ENCODE measurements at regions of chr13 and their contacts with region 1.

Region 1: DNA sequence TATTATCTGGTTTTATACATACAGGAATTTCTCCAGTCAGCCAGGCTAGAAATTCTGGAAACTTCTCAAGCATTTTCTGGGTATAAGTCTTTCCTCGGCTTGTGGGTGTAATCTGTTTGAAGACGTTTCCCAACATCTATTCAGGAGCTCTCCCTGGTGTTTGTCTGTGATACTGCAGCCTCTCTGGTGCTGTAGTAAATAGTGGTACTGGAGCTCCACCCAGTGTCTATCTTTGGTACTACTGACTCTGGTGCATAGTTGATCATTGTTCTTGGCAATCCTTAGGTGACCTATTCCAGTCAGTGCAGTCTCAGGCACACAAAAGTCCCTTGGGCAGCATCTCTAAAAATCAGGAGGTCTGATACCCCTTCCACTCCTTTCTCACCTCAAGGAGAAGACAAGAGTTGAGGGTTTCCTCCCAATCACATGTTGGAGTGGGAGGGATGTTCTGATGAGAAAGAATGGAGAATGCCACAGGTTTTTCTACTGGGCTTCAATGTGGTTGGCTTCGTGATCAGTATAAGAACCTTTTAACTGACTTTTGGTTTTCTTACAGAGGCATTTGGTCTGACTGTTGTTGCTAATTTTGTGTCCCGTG is 115.5 kb downstream of the CYSLTR2 start:
- DNase-seq: peak; percentile 68
- ATAC-seq: peak; percentile 98
- H3K4me3 ChIP-seq: no peak overlapping the region
- H3K27ac ChIP-seq: no peak overlapping the region
- H3K4me1 ChIP-seq: no peaks in the 10 kb centered on the region
- H3K27me3 ChIP-seq: no peaks in the 10 kb centered on the region; a peak in 1 of 4 replicates
- CTCF ChIP-seq: peak; percentile 97 to 100 (median 99); a peak in 5 of 6 replicates
- EP300 ChIP-seq: no peak
- POLR2A ChIP-seq: no peak
- RAD21 ChIP-seq: peak; percentile 100

Region 2: DNA sequence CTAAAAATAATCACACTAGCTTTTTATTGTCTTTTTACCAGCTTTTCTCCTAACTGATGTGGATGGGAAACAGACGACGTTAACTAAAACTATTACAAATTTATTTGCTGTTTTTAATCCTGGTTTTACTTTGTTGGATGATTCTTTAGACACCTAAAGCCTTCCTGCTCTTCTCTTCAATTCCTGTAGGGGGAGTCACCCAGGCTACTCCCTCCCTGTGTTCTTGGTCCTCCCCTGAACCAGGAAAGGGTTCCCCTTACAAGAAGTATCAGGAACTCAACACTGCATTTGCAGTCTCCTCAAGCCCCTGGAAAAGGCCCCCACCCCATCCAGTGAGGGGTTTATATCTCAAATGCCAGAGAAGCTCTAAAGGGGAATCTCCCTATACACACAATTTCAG is 974.2 kb before region 1 on chr13:
- CTCF ChIA-PET with region 1: no interaction called
- POLR2A ChIA-PET with region 1: no interaction called
- RAD21 ChIA-PET with region 1: interaction called, 3 read pairs
- SMC1A ChIA-PET with region 1: no interaction called
- in situ Hi-C with region 1: no loop called
- intact Hi-C with region 1: loop called (anchors 10 kb)
- DNase-seq: no peak
- ATAC-seq: peak; percentile 52
- H3K4me3 ChIP-seq: no peak overlapping the region
- H3K27ac ChIP-seq: no peak overlapping the region
- H3K4me1 ChIP-seq: no peaks in the 10 kb centered on the region
- H3K27me3 ChIP-seq: no peaks in the 10 kb centered on the region
- CTCF ChIP-seq: peak; percentile 20 to 55 (median 52); a peak in 4 of 6 replicates
- EP300 ChIP-seq: no peak
- POLR2A ChIP-seq: no peak
- RAD21 ChIP-seq: no peak

Region 3: GRCh38 chr13:48126944-48127830 is 642.0 kb before region 1 on chr13:
- CTCF ChIA-PET with region 1: interaction called, 16 read pairs
- POLR2A ChIA-PET with region 1: no interaction called
- RAD21 ChIA-PET with region 1: interaction called, 5 read pairs
- SMC1A ChIA-PET with region 1: interaction called, 4 read pairs
- in situ Hi-C with region 1: loop called (anchors 5 kb)
- intact Hi-C with region 1: loop called (anchors 1 kb)
- DNase-seq: peak; percentile 47
- ATAC-seq: peak; percentile 93
- H3K4me3 ChIP-seq: no peak overlapping the region
- H3K27ac ChIP-seq: no peak overlapping the region
- H3K4me1 ChIP-seq: no peaks in the 10 kb centered on the region
- H3K27me3 ChIP-seq: peaks cover 0 to 2% of the 10 kb centered on the region in 2 experiments; a peak in 2 of 4 replicates
- CTCF ChIP-seq: peak; percentile 58 to 72 (median 65)
- EP300 ChIP-seq: no peak
- POLR2A ChIP-seq: no peak
- RAD21 ChIP-seq: peak; percentile 69

Region 4: DNA sequence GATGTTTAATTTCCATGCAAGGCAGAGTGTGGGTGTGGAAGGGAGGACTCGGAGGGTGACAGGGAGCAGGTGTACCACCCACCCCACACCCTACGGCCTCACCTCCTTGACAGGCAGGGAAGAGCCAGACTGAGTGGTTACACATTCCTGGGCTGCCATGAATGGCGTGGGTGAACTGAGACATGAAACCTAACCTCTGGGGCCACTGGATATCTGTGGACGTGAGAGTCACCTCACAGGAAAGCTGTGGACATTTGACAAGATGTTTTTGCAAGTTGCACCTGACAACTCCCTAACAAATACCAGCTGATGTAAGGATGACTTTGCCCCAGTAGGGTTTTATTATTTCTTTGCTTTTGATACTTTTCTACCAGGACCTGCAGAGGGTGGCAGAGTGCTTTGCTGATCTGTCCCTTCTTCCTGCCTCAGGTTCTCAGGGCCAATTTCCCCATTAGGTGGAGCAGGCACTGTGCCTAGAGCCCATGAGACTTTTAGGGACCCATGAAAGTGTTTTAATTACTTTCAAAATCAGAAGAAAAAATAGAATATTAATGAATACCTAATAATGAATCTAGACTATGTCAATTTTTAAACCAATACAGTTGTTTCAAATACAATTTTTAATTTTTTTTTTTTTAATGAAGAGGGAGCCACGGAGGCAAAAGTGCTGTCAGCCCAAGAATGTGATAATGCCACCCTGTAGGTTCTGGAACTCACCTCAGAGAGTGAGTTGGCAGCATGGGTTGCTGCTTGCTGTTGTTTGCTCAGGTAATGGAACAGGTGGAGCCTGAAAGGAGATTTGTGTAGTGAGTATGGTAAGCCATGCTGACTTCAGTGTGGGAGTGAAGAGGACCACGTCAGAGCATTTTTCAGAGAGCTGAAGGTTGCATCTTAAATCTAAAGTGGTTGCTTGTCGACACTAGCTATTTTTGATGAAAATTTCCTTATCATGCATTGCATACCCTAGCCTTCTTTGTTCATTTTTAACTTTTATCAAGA is 173.5 kb before region 1 on chr13:
- CTCF ChIA-PET with region 1: interaction called, 98 read pairs
- POLR2A ChIA-PET with region 1: no interaction called
- RAD21 ChIA-PET with region 1: interaction called, 19 read pairs
- SMC1A ChIA-PET with region 1: interaction called, 46 read pairs
- in situ Hi-C with region 1: loop called (anchors 5 kb)
- intact Hi-C with region 1: loop called (anchors 1 kb)
- DNase-seq: no peak
- ATAC-seq: peak; percentile 88
- H3K4me3 ChIP-seq: no peak overlapping the region
- H3K27ac ChIP-seq: no peak overlapping the region
- H3K4me1 ChIP-seq: peaks cover 16% of the 10 kb centered on the region
- H3K27me3 ChIP-seq: no peaks in the 10 kb centered on the region; a peak in 1 of 4 replicates
- CTCF ChIP-seq: peak; percentile 57 to 81 (median 69); a peak in 5 of 6 replicates
- EP300 ChIP-seq: no peak
- POLR2A ChIP-seq: no peak
- RAD21 ChIP-seq: peak; percentile 79

Region 5: DNA sequence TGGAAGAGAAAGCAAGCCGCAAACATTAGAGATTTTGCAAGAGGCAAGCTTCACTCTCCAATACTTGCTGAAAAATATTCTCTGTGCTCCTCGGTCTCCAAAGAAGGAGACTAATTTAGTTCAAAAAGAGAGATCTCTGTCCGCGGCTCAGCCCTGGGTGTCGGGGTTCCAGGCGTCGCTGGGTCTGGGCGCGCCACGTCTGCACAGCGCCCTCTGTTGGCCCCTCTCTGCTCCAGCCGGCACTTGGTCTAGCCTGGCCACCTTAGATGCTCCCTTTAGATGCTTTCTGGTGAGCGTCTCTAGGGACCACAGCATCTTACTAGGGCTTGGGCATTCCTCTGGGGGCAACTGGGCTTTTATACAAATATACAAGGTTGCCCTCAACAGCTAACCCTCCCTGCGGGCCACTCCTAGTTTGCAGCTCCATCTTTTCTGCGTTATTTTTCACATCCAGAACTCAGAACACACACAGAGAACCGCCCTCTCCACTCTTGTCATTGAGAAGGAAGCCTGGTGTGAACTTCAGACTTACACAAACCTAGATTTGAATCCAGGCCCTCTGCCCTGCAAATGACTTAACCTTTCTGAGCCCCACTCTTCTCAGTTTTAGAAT is 37.1 kb before region 1 on chr13:
- CTCF ChIA-PET with region 1: interaction called, 11 read pairs
- POLR2A ChIA-PET with region 1: no interaction called
- RAD21 ChIA-PET with region 1: no interaction called
- SMC1A ChIA-PET with region 1: interaction called, 3 read pairs
- in situ Hi-C with region 1: no loop called
- intact Hi-C with region 1: no loop called
- DNase-seq: no peak
- ATAC-seq: peak; percentile 91
- H3K4me3 ChIP-seq: no peak overlapping the region
- H3K27ac ChIP-seq: no peak overlapping the region
- H3K4me1 ChIP-seq: no peaks in the 10 kb centered on the region
- H3K27me3 ChIP-seq: no peaks in the 10 kb centered on the region; a peak in 1 of 4 replicates
- CTCF ChIP-seq: peak; percentile 59 to 87 (median 81)
- EP300 ChIP-seq: no peak
- POLR2A ChIP-seq: no peak
- RAD21 ChIP-seq: peak; percentile 36; the same call in 1 of the 2 replicates

Region 6: GRCh38 chr13:48749699-48750473 is 19.3 kb before region 1 on chr13:
- CTCF ChIA-PET with region 1: interaction called, 73 read pairs
- POLR2A ChIA-PET with region 1: no interaction called
- RAD21 ChIA-PET with region 1: interaction called, 12 read pairs
- SMC1A ChIA-PET with region 1: interaction called, 17 read pairs
- in situ Hi-C with region 1: no loop called
- intact Hi-C with region 1: loop called (anchors 1 kb)
- DNase-seq: peak; percentile 73
- ATAC-seq: peak; percentile 98
- H3K4me3 ChIP-seq: no peak overlapping the region
- H3K27ac ChIP-seq: no peak overlapping the region
- H3K4me1 ChIP-seq: peaks cover 10% of the 10 kb centered on the region
- H3K27me3 ChIP-seq: no peaks in the 10 kb centered on the region; a peak in 1 of 4 replicates
- CTCF ChIP-seq: peak; percentile 64 to 73 (median 64)
- EP300 ChIP-seq: peak; percentile 48 to 72; a peak in 2 of 4 replicates
- POLR2A ChIP-seq: no peak
- RAD21 ChIP-seq: peak; percentile 57

Region 7: DNA sequence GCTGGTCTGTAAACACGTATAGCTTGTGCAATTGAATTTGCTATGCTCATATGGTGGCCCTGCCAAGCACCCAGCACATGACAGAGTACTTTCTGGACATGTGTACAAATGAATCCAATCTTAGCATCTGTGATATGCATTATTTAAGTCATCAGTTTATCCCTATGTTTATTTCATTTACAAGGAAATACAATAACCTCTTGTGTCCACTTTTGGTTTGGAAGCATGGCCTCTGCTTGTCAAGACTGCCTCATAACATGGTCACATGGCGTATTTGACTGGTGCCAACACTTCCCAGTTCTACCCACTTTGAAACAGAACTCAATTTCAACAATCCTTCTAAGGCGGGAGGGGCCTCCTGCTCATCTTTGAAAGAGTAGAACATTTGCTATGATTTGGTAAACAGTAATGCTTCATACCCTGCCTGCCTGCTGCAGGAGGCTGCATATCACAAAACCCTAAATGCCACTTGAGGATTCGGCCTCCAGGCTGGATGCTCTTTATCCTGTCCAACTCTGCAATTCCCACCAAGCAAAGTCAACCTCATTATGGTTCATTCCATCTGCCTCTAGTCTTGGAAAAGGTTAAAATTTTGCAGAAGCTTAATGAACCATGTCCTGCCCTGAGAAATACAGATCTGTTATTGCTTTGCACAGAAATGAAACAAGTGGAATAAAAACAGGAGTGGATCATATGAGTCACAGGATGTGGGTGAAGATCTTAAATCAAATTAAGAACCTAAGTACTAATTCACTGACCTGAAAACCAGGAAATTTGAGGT is 35.8 kb after region 1 on chr13:
- CTCF ChIA-PET with region 1: no interaction called
- POLR2A ChIA-PET with region 1: no interaction called
- RAD21 ChIA-PET with region 1: no interaction called
- SMC1A ChIA-PET with region 1: no interaction called
- in situ Hi-C with region 1: no loop called
- intact Hi-C with region 1: no loop called
- DNase-seq: no peak
- ATAC-seq: no peak
- H3K4me3 ChIP-seq: no peak overlapping the region
- H3K27ac ChIP-seq: no peak overlapping the region
- H3K4me1 ChIP-seq: no peaks in the 10 kb centered on the region
- H3K27me3 ChIP-seq: no peaks in the 10 kb centered on the region
- CTCF ChIP-seq: no peak
- EP300 ChIP-seq: no peak
- POLR2A ChIP-seq: no peak
- RAD21 ChIP-seq: no peak

Region 8: DNA sequence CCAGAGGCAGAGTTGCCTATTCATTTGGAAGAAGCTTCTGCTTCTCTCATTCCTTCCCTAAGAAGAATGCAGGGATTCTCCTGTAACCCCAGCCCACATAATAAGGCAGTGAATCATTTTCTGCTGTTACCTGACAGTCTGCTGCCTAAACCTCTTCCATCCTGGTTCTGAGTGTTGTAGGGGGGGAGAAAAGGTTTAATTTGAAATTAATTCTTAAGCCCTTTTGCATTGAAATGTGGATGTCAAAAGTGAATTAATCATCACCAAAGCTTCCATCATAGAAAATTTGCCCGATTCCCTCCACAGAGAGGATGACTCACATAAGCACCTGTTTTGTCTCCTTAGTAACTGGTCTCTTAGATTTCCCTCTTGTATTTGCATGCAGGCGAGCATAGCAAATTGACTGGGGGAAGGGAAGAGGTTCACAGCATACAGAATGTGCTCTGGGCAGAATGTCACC is 59.8 kb after region 1 on chr13:
- CTCF ChIA-PET with region 1: no interaction called
- POLR2A ChIA-PET with region 1: interaction called, 10 read pairs
- RAD21 ChIA-PET with region 1: no interaction called
- SMC1A ChIA-PET with region 1: no interaction called
- in situ Hi-C with region 1: no loop called
- intact Hi-C with region 1: no loop called
- DNase-seq: no peak
- ATAC-seq: no peak; the same call in 2 of the 3 replicates
- H3K4me3 ChIP-seq: no peak overlapping the region
- H3K27ac ChIP-seq: no peak overlapping the region
- H3K4me1 ChIP-seq: peaks cover 7% of the 10 kb centered on the region; the same call in 1 of the 2 replicates
- H3K27me3 ChIP-seq: no peaks in the 10 kb centered on the region; a peak in 1 of 4 replicates
- CTCF ChIP-seq: no peak
- EP300 ChIP-seq: no peak
- POLR2A ChIP-seq: no peak
- RAD21 ChIP-seq: no peak

Region 9: GRCh38 chr13:49023446-49023845 is 254.2 kb after region 1 on chr13:
- CTCF ChIA-PET with region 1: no interaction called
- POLR2A ChIA-PET with region 1: no interaction called
- RAD21 ChIA-PET with region 1: no interaction called
- SMC1A ChIA-PET with region 1: no interaction called
- in situ Hi-C with region 1: no loop called
- intact Hi-C with region 1: no loop called
- DNase-seq: no peak
- ATAC-seq: no peak
- H3K4me3 ChIP-seq: no peak overlapping the region
- H3K27ac ChIP-seq: no peak overlapping the region
- H3K4me1 ChIP-seq: no peaks in the 10 kb centered on the region
- H3K27me3 ChIP-seq: no peaks in the 10 kb centered on the region
- CTCF ChIP-seq: no peak
- EP300 ChIP-seq: no peak
- POLR2A ChIP-seq: no peak
- RAD21 ChIP-seq: no peak